Heart right ventricle (tissue), 16 donors: ENCODE measurements at regions of chr18 and their contacts with region 1.

Region 1: GRCh38 chr18:4510711-4511110 is 55.6 kb upstream of the DLGAP1 start:
- DNase-seq: no peak
- ATAC-seq: peak in 7 of 8 donors; percentile 49 to 92 (median 81)
- H3K4me3 ChIP-seq: no peak overlapping the region
- H3K27ac ChIP-seq: no peak overlapping the region
- H3K4me1 ChIP-seq: no peaks in the 10 kb centered on the region
- H3K27me3 ChIP-seq: no peaks in the 10 kb centered on the region
- CTCF ChIP-seq: no peak

Region 2: GRCh38 chr18:4455113-4455811 is 55.4 kb before region 1 on chr18 and contains the start of gene DLGAP1:
- intact Hi-C with region 1: loop called in 1 of 10 experiments (anchors 10 kb)
- DNase-seq: peak in 1 of 2 donors; percentile 29
- ATAC-seq: peak in 5 of 8 donors; percentile 69 to 80 (median 76)
- H3K4me3 ChIP-seq: peak within 1 kb of the TSS in 9 of 10 donors; percentile 24 to 47 (median 41)
- H3K27ac ChIP-seq: no peak within 1 kb of the TSS
- H3K4me1 ChIP-seq: peaks cover 0 to 12% (median 7%) of the 10 kb centered on the region in 9 donors
- H3K27me3 ChIP-seq: peaks cover 13 to 82% (median 65%) of the 10 kb centered on the region in 7 donors
- CTCF ChIP-seq: no peak
- total RNA-seq, gene DLGAP1: 0.10 to 7.2 (median 1.9) TPM in 8 of 10 donors, not detected in the others